ENCODE measurements at regions of chr6 and their contacts with region 1.

Region 1: GRCh38 chr6:52839119-52840055 is 1.2 kb downstream of the GSTA5 start:
- DNase-seq: peak; percentile 82
- H3K4me3 Mint-ChIP-seq: no peak overlapping the region
- H3K27ac Mint-ChIP-seq: no peak overlapping the region
- H3K4me1 Mint-ChIP-seq: no peaks in the 10 kb centered on the region
- H3K27me3 Mint-ChIP-seq: peaks cover 36% of the 10 kb centered on the region

Region 2: DNA sequence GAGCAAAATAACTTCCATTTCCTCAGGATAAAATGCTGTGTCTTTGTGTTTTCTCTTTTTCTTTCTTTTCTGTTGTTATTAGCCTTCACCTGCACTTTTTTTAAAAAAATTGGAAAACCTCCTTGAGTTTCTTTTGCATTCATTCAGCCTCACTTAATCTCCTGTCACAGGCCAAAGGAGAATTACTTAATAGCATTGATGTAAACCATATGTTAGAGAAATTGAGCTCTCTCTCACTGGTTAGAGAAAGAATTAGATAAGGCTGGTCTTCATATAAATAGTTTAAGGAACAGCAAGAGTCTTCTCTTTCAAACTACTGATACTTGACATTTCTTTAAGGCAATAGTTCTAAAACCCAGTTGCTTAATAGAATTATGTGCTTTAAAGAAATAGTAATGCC is 1456.5 kb before region 1 on chr6:
- intact Hi-C with region 1: no loop called
- DNase-seq: no peak
- H3K4me3 Mint-ChIP-seq: no peak overlapping the region
- H3K27ac Mint-ChIP-seq: no peak overlapping the region
- H3K4me1 Mint-ChIP-seq: no peaks in the 10 kb centered on the region
- H3K27me3 Mint-ChIP-seq: no peaks in the 10 kb centered on the region

Region 3: DNA sequence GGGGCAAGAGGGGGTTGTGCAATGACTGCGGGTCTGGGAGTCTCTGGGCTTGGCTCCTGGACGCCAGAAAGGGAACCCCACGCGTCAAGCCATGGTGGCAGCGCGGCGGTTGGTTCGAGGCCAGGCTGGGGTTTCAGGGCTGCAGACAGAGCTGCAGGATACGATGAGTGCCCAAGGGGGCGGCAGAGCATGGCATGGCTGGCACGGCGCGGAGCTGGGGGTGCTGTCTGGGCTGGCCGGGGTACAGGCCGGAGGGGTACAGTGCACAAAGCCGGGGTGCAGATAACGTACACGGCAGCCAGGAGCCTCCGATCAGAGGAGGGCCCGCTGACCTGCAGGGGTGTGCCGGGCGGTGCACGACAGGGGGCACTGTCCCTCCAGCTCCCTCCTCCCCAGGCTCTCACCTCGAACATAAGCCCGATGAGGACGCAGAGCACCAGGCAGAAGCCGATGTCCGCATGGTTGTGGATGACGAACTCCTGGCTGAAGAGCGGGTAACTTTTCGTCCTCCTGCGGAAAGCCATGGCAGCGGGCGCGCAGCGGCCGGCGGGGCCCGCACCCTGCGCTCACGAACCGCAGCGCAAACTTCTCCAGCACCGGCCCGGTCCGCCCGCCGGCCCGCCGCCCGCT is 262.9 kb before region 1 on chr6:
- intact Hi-C with region 1: no loop called
- DNase-seq: no peak
- H3K4me3 Mint-ChIP-seq: peak overlapping the region; percentile 81
- H3K27ac Mint-ChIP-seq: peak overlapping the region; percentile 71
- H3K4me1 Mint-ChIP-seq: peaks cover 30% of the 10 kb centered on the region
- H3K27me3 Mint-ChIP-seq: peaks cover 12% of the 10 kb centered on the region

Region 4: DNA sequence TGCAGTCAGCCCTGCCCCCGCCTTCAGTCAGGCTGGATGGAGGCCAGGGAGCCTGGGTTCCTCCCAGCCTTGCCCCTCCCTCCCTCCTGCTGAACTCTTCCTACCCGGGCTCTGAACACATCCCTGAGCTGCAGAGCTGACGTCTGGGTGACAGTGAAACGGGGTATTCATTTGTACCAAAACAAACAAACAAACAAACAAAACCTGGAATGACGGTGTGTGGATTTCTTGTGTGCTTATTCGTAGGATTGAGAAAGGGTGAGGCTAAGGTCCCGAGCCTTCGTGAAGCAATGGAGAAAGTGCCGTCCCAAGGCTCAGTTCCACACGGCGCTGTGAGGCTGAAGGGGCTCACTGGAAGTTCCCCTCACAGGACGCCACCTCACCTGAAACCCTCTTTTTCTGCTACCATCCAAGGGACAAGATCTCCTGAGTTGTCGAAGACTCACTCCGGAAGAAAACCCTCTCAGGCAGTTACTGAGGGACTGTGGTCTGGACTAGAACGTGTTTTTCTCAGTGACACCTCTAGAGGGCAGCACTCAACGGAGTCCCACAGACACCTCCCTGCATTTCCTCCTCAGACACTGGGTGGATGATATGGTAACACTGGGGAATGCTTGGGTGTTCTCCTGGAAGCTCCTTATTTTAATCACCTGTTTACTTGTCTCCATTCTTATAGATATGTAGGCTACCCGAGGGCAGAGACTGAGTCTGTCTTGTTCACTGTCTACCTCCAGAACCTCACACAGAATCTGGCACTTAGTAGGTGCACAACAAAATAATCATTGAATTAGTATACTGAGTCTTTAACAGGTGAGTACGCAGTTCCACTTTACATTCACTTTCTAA is 42.8 kb after region 1 on chr6:
- intact Hi-C with region 1: loop called (anchors 5 kb)
- DNase-seq: peak; percentile 90
- H3K4me3 Mint-ChIP-seq: peak overlapping the region; percentile 82
- H3K27ac Mint-ChIP-seq: peak overlapping the region; percentile 45
- H3K4me1 Mint-ChIP-seq: peaks cover 9% of the 10 kb centered on the region
- H3K27me3 Mint-ChIP-seq: no peaks in the 10 kb centered on the region

Measured in activated CD4-positive, alpha-beta T cell treated with anti-CD3 and anti-CD28 coated beads, Interleukin-2, amount 10 ng/mL, durations not matched to agents 24 days and 14 days (primary cell).